Activated T-helper 1 cell treated with anti-CD3 and anti-CD28 coated beads, Interleukin-12 subunit alpha, Interleukin-12 subunit beta, Interleukin-2, Interleukin-4 antibody, amounts not matched to agents 30 ng/mL and 10 ng/mL and 1 ng/mL, durations not matched to agents 14 hours and 24 hours and 36 hours (primary cell): ENCODE measurements at regions of chr10 and their contacts with region 1.

Region 1: GRCh38 chr10:47176903-47177868 is 122.8 kb upstream of the GDF10 start:
- DNase-seq: no peak
- H3K4me3 Mint-ChIP-seq: no peak overlapping the region
- H3K27ac Mint-ChIP-seq: no peak overlapping the region
- H3K4me1 Mint-ChIP-seq: no peaks in the 10 kb centered on the region
- H3K27me3 Mint-ChIP-seq: no peaks in the 10 kb centered on the region

Region 2: GRCh38 chr10:47047671-47048525 is 129.3 kb before region 1 on chr10:
- intact Hi-C with region 1: loop called (anchors 5 kb)
- DNase-seq: peak; percentile 54
- H3K4me3 Mint-ChIP-seq: no peak overlapping the region
- H3K27ac Mint-ChIP-seq: no peak overlapping the region
- H3K4me1 Mint-ChIP-seq: peaks cover 4% of the 10 kb centered on the region
- H3K27me3 Mint-ChIP-seq: peaks cover 2% of the 10 kb centered on the region

Region 3: DNA sequence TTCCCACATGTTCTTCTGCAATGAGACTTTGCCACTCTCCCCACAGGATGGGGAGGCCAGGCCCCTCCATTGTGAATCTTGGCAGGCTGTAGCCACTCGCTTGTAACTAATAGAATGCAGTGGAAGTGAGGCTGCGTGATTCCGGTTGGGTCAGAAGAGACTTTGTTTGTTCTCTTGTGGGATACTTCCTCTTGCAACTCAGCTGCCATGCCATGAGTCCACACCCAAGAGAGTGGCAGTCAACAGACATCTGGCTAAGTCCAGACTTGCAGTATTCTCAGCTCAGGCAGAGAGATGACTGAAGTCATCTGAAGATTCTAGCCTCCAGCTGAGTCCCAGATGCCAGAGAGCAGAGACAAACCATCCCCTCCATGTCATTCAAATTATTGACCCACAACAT is 30.6 kb before region 1 on chr10:
- intact Hi-C with region 1: no loop called
- DNase-seq: no peak
- H3K4me3 Mint-ChIP-seq: no peak overlapping the region
- H3K27ac Mint-ChIP-seq: no peak overlapping the region
- H3K4me1 Mint-ChIP-seq: no peaks in the 10 kb centered on the region
- H3K27me3 Mint-ChIP-seq: peaks cover 6% of the 10 kb centered on the region

Region 4: DNA sequence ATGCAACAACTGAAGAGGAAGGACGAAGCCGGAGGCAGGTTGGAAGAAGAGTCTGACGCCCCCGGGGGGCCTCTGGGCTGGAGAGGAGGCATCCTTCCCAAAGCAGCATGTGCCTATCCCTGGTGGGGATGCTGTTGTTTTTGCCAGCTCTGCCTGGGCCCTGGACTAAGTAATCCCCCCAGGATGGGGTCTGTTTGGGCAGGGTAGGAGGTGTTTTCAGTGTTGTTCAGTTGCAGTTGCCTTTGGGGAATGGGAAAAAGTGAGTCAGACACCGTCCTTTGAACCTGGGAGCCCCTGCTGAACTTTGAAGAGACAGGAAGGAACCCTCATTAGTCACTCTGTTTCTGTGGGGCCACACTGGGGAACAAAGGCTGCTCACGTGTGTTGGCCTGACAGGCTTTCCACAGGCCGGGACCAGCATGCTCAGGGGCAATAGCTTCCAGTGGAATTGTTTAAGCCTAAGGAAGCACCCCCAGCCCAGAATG is 87.7 kb after region 1 on chr10:
- intact Hi-C with region 1: loop called (anchors 2 kb)
- DNase-seq: peak; percentile 23
- H3K4me3 Mint-ChIP-seq: no peak overlapping the region
- H3K27ac Mint-ChIP-seq: peak overlapping the region; percentile 83
- H3K4me1 Mint-ChIP-seq: peaks cover 52% of the 10 kb centered on the region
- H3K27me3 Mint-ChIP-seq: no peaks in the 10 kb centered on the region